CD4-positive, alpha-beta memory T cell (primary cell): ENCODE measurements at regions of chr3 and their contacts with region 1.

Region 1: DNA sequence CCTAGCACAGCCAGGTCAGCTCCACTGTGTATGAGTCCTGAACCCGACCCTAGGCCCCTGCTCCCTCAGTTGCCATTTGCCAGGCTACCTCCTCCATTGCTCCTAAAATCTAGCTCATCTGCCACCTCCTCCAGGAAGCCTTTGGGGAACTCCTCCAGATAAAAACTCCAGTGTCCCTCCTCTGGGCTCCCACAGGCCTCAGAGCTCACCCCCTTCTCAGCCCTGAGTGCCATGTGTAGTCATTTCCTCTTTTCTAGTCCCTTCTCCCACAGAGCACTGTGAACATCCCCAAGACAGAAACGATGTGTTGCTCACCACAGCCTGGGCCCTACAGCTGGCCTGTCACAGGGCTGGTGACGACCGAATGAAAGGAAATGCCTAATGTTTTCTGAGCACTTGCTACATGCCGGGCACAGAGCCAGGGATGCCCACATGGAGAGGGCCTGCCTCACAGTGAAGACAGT is 61.0 kb downstream of the IQSEC1 start:
- DNase-seq: peak; percentile 28 to 67 (median 47)
- H3K4me3 ChIP-seq: peak overlapping the region in 1 of 2 donors; percentile 70
- H3K4me3 Mint-ChIP-seq: peak overlapping the region; percentile 79 to 95 (median 86)
- H3K27ac ChIP-seq: peak overlapping the region; percentile 99
- H3K27ac Mint-ChIP-seq: peak overlapping the region; percentile 90 to 100 (median 100)
- H3K4me1 ChIP-seq: peaks cover 91% of the 10 kb centered on the region
- H3K4me1 Mint-ChIP-seq: peaks cover 60 to 97% (median 74%) of the 10 kb centered on the region in 4 donors
- H3K27me3 ChIP-seq: no peaks in the 10 kb centered on the region
- H3K27me3 Mint-ChIP-seq: no peaks in the 10 kb centered on the region

Region 2: GRCh38 chr3:12532182-12532581 is 480.1 kb before region 1 on chr3:
- CTCF ChIA-PET with region 1: no interaction called
- POLR2A ChIA-PET with region 1: no interaction called
- intact Hi-C with region 1: no loop called
- DNase-seq: no peak
- H3K4me3 ChIP-seq: no peak overlapping the region
- H3K4me3 Mint-ChIP-seq: no peak overlapping the region
- H3K27ac ChIP-seq: no peak overlapping the region
- H3K27ac Mint-ChIP-seq: peak overlapping the region in 1 of 7 donors; percentile 22
- H3K4me1 ChIP-seq: no peaks in the 10 kb centered on the region
- H3K4me1 Mint-ChIP-seq: peaks cover 0 to 1% (median 0%) of the 10 kb centered on the region in 4 donors
- H3K27me3 ChIP-seq: no peaks in the 10 kb centered on the region
- H3K27me3 Mint-ChIP-seq: no peaks in the 10 kb centered on the region

Region 3: GRCh38 chr3:12916159-12916558 is 96.1 kb before region 1 on chr3:
- CTCF ChIA-PET with region 1: no interaction called
- POLR2A ChIA-PET with region 1: no interaction called
- intact Hi-C with region 1: no loop called
- DNase-seq: peak in 4 of 5 donors; percentile 28 to 41 (median 35)
- H3K4me3 ChIP-seq: no peak overlapping the region
- H3K4me3 Mint-ChIP-seq: peak overlapping the region in 4 of 8 donors; percentile 33 to 57 (median 52)
- H3K27ac ChIP-seq: no peak overlapping the region
- H3K27ac Mint-ChIP-seq: peak overlapping the region in 6 of 7 donors; percentile 4 to 78 (median 68)
- H3K4me1 ChIP-seq: peaks cover 24% of the 10 kb centered on the region
- H3K4me1 Mint-ChIP-seq: peaks cover 14 to 29% (median 18%) of the 10 kb centered on the region in 4 donors
- H3K27me3 ChIP-seq: no peaks in the 10 kb centered on the region
- H3K27me3 Mint-ChIP-seq: no peaks in the 10 kb centered on the region

Region 4: GRCh38 chr3:12967606-12968351 is 44.5 kb before region 1 on chr3:
- CTCF ChIA-PET with region 1: no interaction called
- POLR2A ChIA-PET with region 1: interaction called, 11 read pairs
- intact Hi-C with region 1: loop called (anchors 1 kb)
- DNase-seq: peak; percentile 82 to 89 (median 83)
- H3K4me3 ChIP-seq: peak overlapping the region in 1 of 2 donors; percentile 50
- H3K4me3 Mint-ChIP-seq: peak overlapping the region; percentile 67 to 86 (median 82)
- H3K27ac ChIP-seq: peak overlapping the region; percentile 8
- H3K27ac Mint-ChIP-seq: peak overlapping the region; percentile 27 to 89 (median 78)
- H3K4me1 ChIP-seq: peaks cover 68% of the 10 kb centered on the region
- H3K4me1 Mint-ChIP-seq: peaks cover 47 to 87% (median 65%) of the 10 kb centered on the region in 4 donors
- H3K27me3 ChIP-seq: no peaks in the 10 kb centered on the region
- H3K27me3 Mint-ChIP-seq: no peaks in the 10 kb centered on the region

Region 5: GRCh38 chr3:12994607-12995388 is 17.5 kb before region 1 on chr3:
- CTCF ChIA-PET with region 1: interaction called, 170 read pairs
- POLR2A ChIA-PET with region 1: interaction called, 171 read pairs
- intact Hi-C with region 1: loop called (anchors 1 kb)
- DNase-seq: peak; percentile 84 to 87 (median 85)
- H3K4me3 ChIP-seq: peak overlapping the region; percentile 54 to 84
- H3K4me3 Mint-ChIP-seq: peak overlapping the region; percentile 91 to 97 (median 94)
- H3K27ac ChIP-seq: peak overlapping the region; percentile 69
- H3K27ac Mint-ChIP-seq: peak overlapping the region; percentile 92 to 97 (median 96)
- H3K4me1 ChIP-seq: peaks cover 62% of the 10 kb centered on the region
- H3K4me1 Mint-ChIP-seq: peaks cover 30 to 82% (median 58%) of the 10 kb centered on the region in 4 donors
- H3K27me3 ChIP-seq: no peaks in the 10 kb centered on the region
- H3K27me3 Mint-ChIP-seq: no peaks in the 10 kb centered on the region

Region 6: DNA sequence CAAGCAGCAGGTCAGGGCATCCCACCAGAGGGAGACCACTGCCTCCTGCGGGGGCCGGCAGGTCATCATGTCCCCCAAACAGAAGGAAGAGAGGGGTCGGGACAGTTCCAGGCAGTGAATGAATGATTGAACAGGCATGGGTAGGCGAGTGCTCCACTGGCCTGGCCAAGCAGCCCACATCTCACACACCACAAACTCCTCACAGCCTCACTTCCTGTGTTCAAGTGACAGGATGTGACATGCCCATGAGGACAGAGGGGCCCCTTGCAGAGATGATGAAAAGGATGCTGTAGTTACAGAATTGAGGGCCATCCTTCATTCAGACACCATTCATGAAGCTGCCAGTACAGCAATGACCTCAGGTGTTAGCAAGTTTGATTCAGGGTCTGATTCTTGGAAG is 57.2 kb after region 1 on chr3:
- CTCF ChIA-PET with region 1: no interaction called
- POLR2A ChIA-PET with region 1: interaction called, 12 read pairs
- intact Hi-C with region 1: loop called (anchors 2 kb)
- DNase-seq: peak; percentile 51 to 63 (median 56)
- H3K4me3 ChIP-seq: peak overlapping the region in 1 of 2 donors; percentile 37
- H3K4me3 Mint-ChIP-seq: peak overlapping the region in 7 of 8 donors; percentile 36 to 79 (median 69)
- H3K27ac ChIP-seq: no peak overlapping the region
- H3K27ac Mint-ChIP-seq: peak overlapping the region; percentile 72 to 91 (median 86)
- H3K4me1 ChIP-seq: peaks cover 51% of the 10 kb centered on the region
- H3K4me1 Mint-ChIP-seq: peaks cover 26 to 46% (median 37%) of the 10 kb centered on the region in 4 donors
- H3K27me3 ChIP-seq: peaks cover 10% of the 10 kb centered on the region
- H3K27me3 Mint-ChIP-seq: peaks cover 7 to 11% of the 10 kb centered on the region in 2 donors

Region 7: DNA sequence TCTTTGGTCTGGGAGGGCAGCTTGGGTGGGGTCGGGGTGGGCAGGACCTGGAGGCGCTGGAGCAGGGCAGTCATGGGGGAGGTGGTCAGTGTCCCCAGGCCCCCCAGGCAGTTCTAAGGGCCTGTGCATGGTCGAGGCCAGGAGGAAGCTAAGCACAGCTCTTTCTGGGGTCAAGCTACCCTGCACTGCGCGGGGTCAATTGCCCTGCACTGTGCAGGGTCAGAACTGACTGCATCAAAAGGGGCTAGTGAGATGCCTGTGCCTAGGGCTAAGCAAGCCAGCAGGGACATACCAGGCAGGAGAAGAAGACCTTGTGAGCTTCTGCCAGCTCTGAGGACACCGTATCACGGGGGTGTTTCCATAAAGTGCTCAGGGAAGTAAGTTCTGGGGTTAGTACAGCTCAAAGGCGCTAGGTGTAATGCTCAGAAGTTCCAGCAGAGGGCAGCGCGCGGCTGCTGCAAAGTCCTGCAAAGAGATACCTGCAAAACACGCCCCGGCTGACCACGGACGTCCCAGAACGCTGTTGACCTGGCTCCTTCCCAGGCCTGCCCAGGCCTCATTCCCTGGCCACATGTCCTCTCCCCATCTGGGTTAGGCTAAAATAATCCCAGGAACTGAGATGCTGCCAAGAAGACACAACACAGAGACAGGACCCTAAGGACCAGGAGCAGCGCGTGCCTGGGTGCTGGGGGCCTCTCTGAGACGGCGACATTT is 79.8 kb after region 1 on chr3:
- CTCF ChIA-PET with region 1: interaction called, 13 read pairs
- POLR2A ChIA-PET with region 1: interaction called, 5 read pairs
- intact Hi-C with region 1: no loop called
- DNase-seq: peak; percentile 67 to 77 (median 71)
- H3K4me3 ChIP-seq: no peak overlapping the region
- H3K4me3 Mint-ChIP-seq: peak overlapping the region in 1 of 8 donors; percentile 60
- H3K27ac ChIP-seq: no peak overlapping the region
- H3K27ac Mint-ChIP-seq: no peak overlapping the region
- H3K4me1 ChIP-seq: peaks cover 6% of the 10 kb centered on the region
- H3K4me1 Mint-ChIP-seq: peaks cover 4 to 6% (median 5%) of the 10 kb centered on the region in 4 donors
- H3K27me3 ChIP-seq: no peaks in the 10 kb centered on the region
- H3K27me3 Mint-ChIP-seq: peaks cover 3 to 9% of the 10 kb centered on the region in 2 donors

Region 8: GRCh38 chr3:13419505-13420044 is 407.3 kb after region 1 on chr3:
- CTCF ChIA-PET with region 1: no interaction called
- POLR2A ChIA-PET with region 1: interaction called, 3 read pairs
- intact Hi-C with region 1: loop called (anchors 10 kb)
- DNase-seq: peak in 4 of 5 donors; percentile 59 to 67 (median 66)
- H3K4me3 ChIP-seq: peak overlapping the region; percentile 55 to 84
- H3K4me3 Mint-ChIP-seq: peak overlapping the region; percentile 91 to 96 (median 94)
- H3K27ac ChIP-seq: peak overlapping the region; percentile 90
- H3K27ac Mint-ChIP-seq: peak overlapping the region; percentile 94 to 99 (median 97)
- H3K4me1 ChIP-seq: peaks cover 74% of the 10 kb centered on the region
- H3K4me1 Mint-ChIP-seq: peaks cover 45 to 85% (median 62%) of the 10 kb centered on the region in 4 donors
- H3K27me3 ChIP-seq: no peaks in the 10 kb centered on the region
- H3K27me3 Mint-ChIP-seq: no peaks in the 10 kb centered on the region

Region 9: GRCh38 chr3:13648060-13649001 is 636.1 kb after region 1 on chr3:
- CTCF ChIA-PET with region 1: no interaction called
- POLR2A ChIA-PET with region 1: no interaction called
- intact Hi-C with region 1: loop called (anchors 10 kb)
- DNase-seq: peak; percentile 62 to 76 (median 72)
- H3K4me3 ChIP-seq: no peak overlapping the region
- H3K4me3 Mint-ChIP-seq: peak overlapping the region in 6 of 8 donors; percentile 35 to 76 (median 56)
- H3K27ac ChIP-seq: no peak overlapping the region
- H3K27ac Mint-ChIP-seq: peak overlapping the region in 3 of 7 donors; percentile 10 to 83 (median 77)
- H3K4me1 ChIP-seq: peaks cover 41% of the 10 kb centered on the region
- H3K4me1 Mint-ChIP-seq: peaks cover 11 to 53% (median 35%) of the 10 kb centered on the region in 4 donors
- H3K27me3 ChIP-seq: no peaks in the 10 kb centered on the region
- H3K27me3 Mint-ChIP-seq: peaks cover 0 to 8% of the 10 kb centered on the region in 2 donors